ENCODE measurements at regions of chr15 and their contacts with region 1.

Region 1: DNA sequence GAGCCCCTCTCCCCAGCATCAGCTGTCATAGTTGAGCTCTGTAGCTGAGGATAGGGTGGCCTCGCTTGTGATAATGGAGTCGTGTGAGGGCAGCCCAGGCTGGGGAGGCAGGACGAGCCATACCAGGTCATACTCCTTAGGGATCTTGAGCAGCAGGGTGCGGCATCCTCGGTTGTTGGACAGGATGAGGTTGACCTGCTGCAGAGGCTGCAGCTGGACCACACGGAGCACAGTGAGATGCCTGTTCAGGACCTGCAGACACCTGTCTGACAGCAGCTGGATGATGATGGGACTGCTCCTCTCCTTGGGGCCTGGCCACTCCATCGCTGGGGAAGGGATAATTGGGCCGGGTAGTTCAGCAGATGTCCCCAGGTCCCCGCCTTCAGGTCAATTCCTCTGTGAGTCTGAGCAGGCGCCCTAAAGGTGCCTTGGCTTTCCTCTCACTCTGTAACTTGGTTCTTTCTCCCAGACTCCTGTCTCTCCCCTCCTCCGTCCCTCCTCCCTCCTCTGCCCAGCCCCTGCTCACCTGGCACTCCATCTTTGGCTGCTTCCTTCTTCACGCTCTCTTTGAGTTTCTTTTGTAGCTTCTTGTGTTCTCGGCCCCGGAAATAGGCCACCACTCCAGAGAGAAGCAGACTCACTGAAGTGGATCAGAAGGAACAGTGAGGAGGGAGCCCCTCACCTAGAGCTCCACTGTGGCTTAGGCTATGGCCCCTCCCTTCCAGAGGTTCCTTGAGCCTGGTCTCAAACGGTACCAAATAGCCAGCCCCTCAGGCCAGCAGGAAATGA is 7.8 kb downstream of the DUOX2 start:
- DNase-seq: no peak
- ATAC-seq: no peak
- H3K4me3 ChIP-seq: no peak overlapping the region
- H3K27ac ChIP-seq: no peak overlapping the region
- H3K4me1 ChIP-seq: no peaks in the 10 kb centered on the region
- H3K27me3 ChIP-seq: no peaks in the 10 kb centered on the region
- CTCF ChIP-seq: no peak
- POLR2A ChIP-seq: no peak
- RAD21 ChIP-seq: no peak

Region 2: GRCh38 chr15:44719293-44719999 is 386.8 kb before region 1 on chr15:
- CTCF ChIA-PET with region 1: no interaction called
- POLR2A ChIA-PET with region 1: no interaction called
- RAD21 ChIA-PET with region 1: no interaction called
- intact Hi-C with region 1: no loop called
- DNase-seq: no peak
- ATAC-seq: peak; percentile 50
- H3K4me3 ChIP-seq: no peak overlapping the region
- H3K27ac ChIP-seq: no peak overlapping the region
- H3K4me1 ChIP-seq: peaks cover 0 to 9% of the 10 kb centered on the region in 2 experiments; a peak in 1 of 4 replicates
- H3K27me3 ChIP-seq: no peaks in the 10 kb centered on the region
- CTCF ChIP-seq: no peak
- POLR2A ChIP-seq: no peak
- RAD21 ChIP-seq: no peak

Region 3: GRCh38 chr15:45118131-45118588 is 12.0 kb after region 1 on chr15:
- CTCF ChIA-PET with region 1: interaction called, 16 read pairs
- POLR2A ChIA-PET with region 1: no interaction called
- RAD21 ChIA-PET with region 1: no interaction called
- intact Hi-C with region 1: no loop called
- DNase-seq: peak; percentile 75
- ATAC-seq: peak; percentile 99
- H3K4me3 ChIP-seq: no peak overlapping the region
- H3K27ac ChIP-seq: no peak overlapping the region
- H3K4me1 ChIP-seq: peaks cover 2 to 16% of the 10 kb centered on the region in 2 experiments; a peak in 3 of 4 replicates
- H3K27me3 ChIP-seq: no peaks in the 10 kb centered on the region
- CTCF ChIP-seq: peak; percentile 99 to 100 (median 99)
- POLR2A ChIP-seq: no peak
- RAD21 ChIP-seq: peak; percentile 79